Activated CD8-positive, alpha-beta T cell treated with anti-CD3 and anti-CD28 coated beads, Interleukin-2, amount 10 ng/mL, durations not matched to agents 7 days and 5 days (primary cell): ENCODE measurements at regions of chr3 and their contacts with region 1.

Region 1: GRCh38 chr3:16190704-16191103 is 16.2 kb downstream of the GALNT15 start:
- DNase-seq: no peak
- ATAC-seq: no peak
- H3K4me3 Mint-ChIP-seq: no peak overlapping the region
- H3K27ac Mint-ChIP-seq: no peak overlapping the region
- H3K4me1 Mint-ChIP-seq: peaks cover 4% of the 10 kb centered on the region
- H3K27me3 Mint-ChIP-seq: no peaks in the 10 kb centered on the region

Region 2: GRCh38 chr3:16177962-16178627 is 12.6 kb before region 1 on chr3:
- CTCF ChIA-PET with region 1: interaction called, 13 read pairs
- POLR2A ChIA-PET with region 1: no interaction called
- DNase-seq: peak; percentile 69
- ATAC-seq: peak; percentile 85
- H3K4me3 Mint-ChIP-seq: no peak overlapping the region
- H3K27ac Mint-ChIP-seq: no peak overlapping the region
- H3K4me1 Mint-ChIP-seq: no peaks in the 10 kb centered on the region
- H3K27me3 Mint-ChIP-seq: peaks cover 18% of the 10 kb centered on the region